ENCODE measurements at regions of chr12 and their contacts with region 1.

Region 1: DNA sequence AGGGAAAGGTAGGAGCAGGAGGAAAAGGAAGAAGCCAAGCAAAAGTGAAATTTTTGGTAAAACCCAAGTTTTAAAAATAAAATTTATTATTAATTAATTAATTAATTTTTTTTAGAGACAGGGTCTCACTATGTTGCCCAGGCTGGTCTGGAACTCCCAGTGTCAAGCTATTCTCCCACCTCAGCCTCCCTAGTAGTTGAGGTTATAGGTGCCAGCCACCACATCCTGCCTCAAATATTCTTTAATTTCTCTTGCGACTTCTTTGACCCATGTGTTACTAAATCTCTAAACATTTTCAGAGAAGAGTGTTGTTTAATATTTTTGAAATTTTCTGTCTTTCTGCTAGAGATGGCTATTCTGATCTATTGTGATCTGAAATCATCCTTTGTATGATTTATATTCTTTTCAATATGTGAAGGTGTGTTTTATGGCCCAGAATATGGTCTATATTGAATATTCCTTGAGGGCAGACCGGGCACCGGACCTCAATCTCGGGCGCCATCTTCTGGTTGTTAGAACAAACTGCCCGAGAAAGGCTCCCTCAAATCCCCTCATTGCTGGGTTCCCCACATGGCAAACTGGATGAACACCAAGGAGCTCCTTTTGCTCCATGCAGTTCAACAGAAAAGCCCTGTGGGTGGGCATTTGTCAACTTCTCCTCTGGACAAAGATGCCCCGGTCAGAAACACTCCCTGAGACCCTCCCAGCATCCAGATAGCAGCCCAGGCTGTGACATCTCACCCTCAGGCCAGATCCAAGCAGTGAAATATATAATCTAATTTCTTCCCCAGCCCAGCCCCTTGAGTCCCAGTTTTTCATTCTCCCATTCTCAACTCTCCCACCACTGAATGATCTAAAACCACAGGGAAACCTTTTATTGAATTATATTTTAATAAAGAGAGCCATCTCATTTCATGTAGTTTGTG is 110.5 kb downstream of the ASCL4 start:
- DNase-seq: peak; percentile 46 to 62 (median 53)
- ATAC-seq: peak; percentile 86 to 94 (median 90)
- H3K4me3 ChIP-seq: no peak overlapping the region
- H3K27ac ChIP-seq: no peak overlapping the region
- H3K4me1 ChIP-seq: no peaks in the 10 kb centered on the region
- H3K27me3 ChIP-seq: no peaks in the 10 kb centered on the region
- CTCF ChIP-seq: peak; percentile 56 to 77 (median 72)
- POLR2A ChIP-seq: no peak

Region 2: DNA sequence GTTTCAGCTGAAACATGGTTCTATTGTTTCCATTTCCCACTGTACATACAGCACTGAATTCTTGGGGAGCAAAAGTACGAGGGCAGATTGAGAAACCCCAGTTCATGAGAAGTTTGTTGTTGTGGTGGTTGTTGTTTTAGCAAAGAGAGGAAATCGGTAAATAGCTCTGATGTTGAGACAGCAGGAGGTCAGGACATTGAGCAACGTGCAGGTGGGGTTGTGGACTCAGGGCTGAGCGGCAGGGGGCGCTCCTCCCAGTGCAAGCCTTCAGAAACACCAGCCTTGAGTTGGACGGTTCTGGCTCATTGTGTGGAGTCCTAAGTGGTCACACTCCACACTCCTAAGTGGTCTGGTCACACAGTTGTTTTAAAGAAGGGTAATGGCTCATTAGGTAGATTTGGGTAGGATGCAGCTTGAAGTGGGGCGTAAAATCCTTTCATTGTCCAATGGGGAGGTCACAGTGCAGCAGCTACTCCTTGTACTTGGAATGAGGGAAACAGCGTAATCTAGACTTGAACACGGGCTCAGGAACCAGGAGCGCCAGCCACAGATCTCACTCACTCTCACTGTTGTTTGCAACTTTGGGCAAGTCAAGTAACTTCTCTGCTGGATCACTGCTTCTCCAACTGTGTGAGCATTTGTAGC is 213.9 kb before region 1 on chr12:
- intact Hi-C with region 1: loop called (anchors 5 kb)
- DNase-seq: peak; percentile 32 to 79 (median 54)
- ATAC-seq: peak; percentile 86 to 95 (median 90)
- H3K4me3 ChIP-seq: no peak overlapping the region
- H3K27ac ChIP-seq: peak overlapping the region in 1 of 3 donors; percentile 76
- H3K4me1 ChIP-seq: peaks cover 0 to 6% (median 0%) of the 10 kb centered on the region in 4 donors
- H3K27me3 ChIP-seq: no peaks in the 10 kb centered on the region
- CTCF ChIP-seq: peak; percentile 60 to 93 (median 73)
- POLR2A ChIP-seq: no peak

Region 3: GRCh38 chr12:107679336-107679735 is 205.7 kb before region 1 on chr12:
- intact Hi-C with region 1: loop called (anchors 5 kb)
- DNase-seq: no peak
- ATAC-seq: no peak
- H3K4me3 ChIP-seq: no peak overlapping the region
- H3K27ac ChIP-seq: no peak overlapping the region
- H3K4me1 ChIP-seq: no peaks in the 10 kb centered on the region
- H3K27me3 ChIP-seq: no peaks in the 10 kb centered on the region
- CTCF ChIP-seq: no peak
- POLR2A ChIP-seq: no peak

Region 4: GRCh38 chr12:107779077-107779831 is 105.8 kb before region 1 on chr12:
- intact Hi-C with region 1: loop called in 1 of 2 experiments (anchors 10 kb)
- DNase-seq: no peak
- ATAC-seq: peak; percentile 38 to 58 (median 47)
- H3K4me3 ChIP-seq: no peak overlapping the region
- H3K27ac ChIP-seq: no peak overlapping the region
- H3K4me1 ChIP-seq: peaks cover 0 to 6% (median 0%) of the 10 kb centered on the region in 4 donors
- H3K27me3 ChIP-seq: peaks cover 4% of the 10 kb centered on the region in 2 donors
- CTCF ChIP-seq: no peak
- POLR2A ChIP-seq: no peak

Region 5: DNA sequence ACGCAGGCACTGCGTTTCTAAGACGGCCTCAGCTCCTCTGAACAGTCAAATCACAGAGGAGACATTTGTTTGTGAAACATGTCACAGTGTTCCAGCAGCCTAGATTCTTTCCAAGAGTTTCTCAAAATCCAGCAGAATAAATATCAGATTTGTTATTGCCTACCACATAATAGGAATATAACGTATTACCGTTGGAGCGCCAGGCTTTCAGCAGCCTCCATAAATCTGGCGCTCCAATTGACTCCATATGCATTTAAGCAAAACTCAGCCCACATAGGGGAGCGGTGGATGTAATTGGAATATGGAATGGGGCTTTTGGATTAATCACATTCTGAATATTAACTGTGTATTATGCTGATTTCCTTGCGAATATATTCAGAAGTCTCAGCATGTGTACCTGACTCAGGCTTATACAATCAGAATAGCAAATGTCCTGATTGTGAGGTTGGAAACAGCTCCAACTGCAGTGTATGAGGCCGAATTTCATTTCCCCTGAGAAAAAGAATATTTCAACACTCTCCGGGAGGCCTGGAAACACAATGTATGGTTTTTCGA is 63.4 kb after region 1 on chr12:
- intact Hi-C with region 1: no loop called
- DNase-seq: no peak
- ATAC-seq: no peak
- H3K4me3 ChIP-seq: no peak overlapping the region
- H3K27ac ChIP-seq: no peak overlapping the region
- H3K4me1 ChIP-seq: no peaks in the 10 kb centered on the region
- H3K27me3 ChIP-seq: no peaks in the 10 kb centered on the region
- CTCF ChIP-seq: no peak
- POLR2A ChIP-seq: no peak

Measured in right lobe of liver (tissue), 6 donors.